B cell (primary cell): ENCODE measurements at regions of chr5 and their contacts with region 1.

Region 1: GRCh38 chr5:137778772-137779564 is 24.8 kb upstream of the HNRNPA0 start:
- DNase-seq: peak; percentile 57
- ATAC-seq: no peak
- H3K4me3 ChIP-seq: no peak overlapping the region
- H3K4me3 Mint-ChIP-seq: no peak overlapping the region
- H3K27ac ChIP-seq: no peak overlapping the region
- H3K27ac Mint-ChIP-seq: no peak overlapping the region
- H3K4me1 ChIP-seq: no peaks in the 10 kb centered on the region
- H3K4me1 Mint-ChIP-seq: peaks cover 1% of the 10 kb centered on the region
- H3K27me3 ChIP-seq: no peaks in the 10 kb centered on the region
- H3K27me3 Mint-ChIP-seq: no peaks in the 10 kb centered on the region
- CTCF ChIP-seq: peak; percentile 91

Region 2: GRCh38 chr5:137629646-137630045 is 149.3 kb before region 1 on chr5:
- CTCF ChIA-PET with region 1: interaction called, 13 read pairs
- POLR2A ChIA-PET with region 1: no interaction called
- intact Hi-C with region 1: no loop called
- DNase-seq: peak; percentile 58
- ATAC-seq: peak; percentile 51
- H3K4me3 ChIP-seq: no peak overlapping the region
- H3K4me3 Mint-ChIP-seq: no peak overlapping the region
- H3K27ac ChIP-seq: no peak overlapping the region
- H3K27ac Mint-ChIP-seq: no peak overlapping the region
- H3K4me1 ChIP-seq: no peaks in the 10 kb centered on the region
- H3K4me1 Mint-ChIP-seq: no peaks in the 10 kb centered on the region
- H3K27me3 ChIP-seq: no peaks in the 10 kb centered on the region
- H3K27me3 Mint-ChIP-seq: no peaks in the 10 kb centered on the region
- CTCF ChIP-seq: peak; percentile 95

Region 3: DNA sequence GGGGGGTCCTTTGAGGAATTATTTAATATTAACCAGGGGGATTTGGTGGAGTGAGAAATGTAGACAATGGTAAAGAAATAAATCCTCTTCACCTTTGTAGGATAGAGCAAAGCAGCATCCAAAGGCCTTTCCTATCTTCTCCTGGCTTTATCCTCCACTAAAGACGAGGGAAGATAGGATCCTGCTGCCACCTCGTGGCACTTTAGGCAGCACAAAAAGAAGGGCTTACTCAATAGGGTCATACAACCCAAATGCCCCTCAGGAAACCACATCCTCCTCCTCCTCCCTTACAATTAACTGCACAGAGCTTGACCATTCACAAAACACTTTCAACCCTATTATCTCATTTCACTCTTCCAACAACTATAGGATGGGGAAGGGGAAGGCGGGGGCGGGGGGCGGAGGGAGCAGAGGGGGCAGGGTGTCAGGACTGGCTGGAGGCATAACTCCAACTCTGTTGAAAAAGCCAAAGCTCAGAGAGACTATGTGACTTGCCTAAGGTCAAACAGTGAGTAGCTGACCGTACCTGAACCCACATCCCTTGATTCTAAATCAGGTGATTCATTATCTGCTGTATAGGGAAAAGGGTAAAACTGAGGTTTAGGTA is 43.3 kb after region 1 on chr5:
- CTCF ChIA-PET with region 1: interaction called, 13 read pairs
- POLR2A ChIA-PET with region 1: no interaction called
- intact Hi-C with region 1: loop called (anchors 1 kb)
- DNase-seq: peak; percentile 22
- ATAC-seq: no peak
- H3K4me3 ChIP-seq: no peak overlapping the region
- H3K4me3 Mint-ChIP-seq: no peak overlapping the region
- H3K27ac ChIP-seq: no peak overlapping the region
- H3K27ac Mint-ChIP-seq: no peak overlapping the region
- H3K4me1 ChIP-seq: no peaks in the 10 kb centered on the region
- H3K4me1 Mint-ChIP-seq: no peaks in the 10 kb centered on the region
- H3K27me3 ChIP-seq: no peaks in the 10 kb centered on the region
- H3K27me3 Mint-ChIP-seq: no peaks in the 10 kb centered on the region
- CTCF ChIP-seq: peak; percentile 13

Region 4: DNA sequence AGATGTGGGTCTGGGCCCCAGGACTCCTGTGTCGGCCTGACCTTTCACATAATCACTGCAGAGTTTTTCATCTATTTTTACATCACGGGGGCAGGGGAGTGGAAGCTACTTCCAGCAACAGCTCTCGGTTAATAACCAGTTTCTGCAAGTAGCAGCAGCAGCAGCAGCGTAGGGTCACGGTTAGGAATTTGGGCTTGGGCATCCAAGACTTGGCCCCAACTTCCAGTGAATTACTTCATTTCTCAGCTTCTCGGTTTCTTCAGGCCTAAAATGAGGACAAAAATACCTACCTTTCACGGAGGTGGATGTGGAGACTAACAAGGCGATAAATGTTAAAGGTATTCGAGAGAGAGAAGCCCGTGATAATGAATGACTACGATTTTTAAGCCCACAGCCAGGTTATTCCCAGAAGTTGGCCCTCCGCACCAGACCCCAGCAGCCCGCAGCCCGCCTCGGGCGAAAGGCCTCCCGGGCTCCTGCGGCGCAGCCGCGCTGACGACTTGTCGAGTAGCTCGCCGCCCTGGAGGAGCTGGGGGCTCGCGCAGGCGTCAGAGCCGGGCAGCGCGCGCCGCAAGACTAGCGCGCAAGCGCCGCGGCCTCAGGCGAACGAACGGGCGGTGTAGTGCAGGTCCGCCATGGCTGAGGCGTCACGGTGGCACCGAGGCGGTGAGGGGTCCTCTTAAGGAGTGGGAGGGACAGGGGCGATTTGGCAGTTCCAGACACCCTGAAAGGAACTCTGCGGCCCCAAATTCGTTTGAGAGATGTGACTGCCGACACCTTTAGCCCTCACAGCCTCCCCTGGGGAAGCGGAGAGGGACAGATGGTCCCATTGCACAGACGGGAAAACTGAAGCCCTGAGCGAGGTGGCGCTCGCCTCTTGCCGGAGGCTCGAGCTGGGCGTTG is 110.1 kb after region 1 on chr5 and contains the start of gene PKD2L2:
- CTCF ChIA-PET with region 1: interaction called, 11 read pairs
- POLR2A ChIA-PET with region 1: no interaction called
- intact Hi-C with region 1: no loop called
- DNase-seq: peak; percentile 92
- ATAC-seq: peak; percentile 99
- H3K4me3 ChIP-seq: peak within 1 kb of the TSS; percentile 39 to 81 (median 77)
- H3K4me3 Mint-ChIP-seq: peak within 1 kb of the TSS; percentile 90
- H3K27ac ChIP-seq: peak within 1 kb of the TSS; percentile 93 to 95
- H3K27ac Mint-ChIP-seq: peak within 1 kb of the TSS; percentile 97
- H3K4me1 ChIP-seq: peaks cover 20 to 22% of the 10 kb centered on the region in 2 donors
- H3K4me1 Mint-ChIP-seq: peaks cover 36% of the 10 kb centered on the region
- H3K27me3 ChIP-seq: no peaks in the 10 kb centered on the region
- H3K27me3 Mint-ChIP-seq: no peaks in the 10 kb centered on the region
- CTCF ChIP-seq: no peak
- total RNA-seq, gene PKD2L2: 0.37 and 0.63 TPM in 2 replicates

Region 5: GRCh38 chr5:137954131-137954879 is 175.3 kb after region 1 on chr5:
- CTCF ChIA-PET with region 1: interaction called, 11 read pairs
- POLR2A ChIA-PET with region 1: no interaction called
- intact Hi-C with region 1: no loop called
- DNase-seq: no peak
- ATAC-seq: no peak
- H3K4me3 ChIP-seq: no peak overlapping the region
- H3K4me3 Mint-ChIP-seq: no peak overlapping the region
- H3K27ac ChIP-seq: no peak overlapping the region
- H3K27ac Mint-ChIP-seq: peak overlapping the region; percentile 20
- H3K4me1 ChIP-seq: no peaks in the 10 kb centered on the region
- H3K4me1 Mint-ChIP-seq: no peaks in the 10 kb centered on the region
- H3K27me3 ChIP-seq: no peaks in the 10 kb centered on the region
- H3K27me3 Mint-ChIP-seq: no peaks in the 10 kb centered on the region
- CTCF ChIP-seq: no peak

Region 6: DNA sequence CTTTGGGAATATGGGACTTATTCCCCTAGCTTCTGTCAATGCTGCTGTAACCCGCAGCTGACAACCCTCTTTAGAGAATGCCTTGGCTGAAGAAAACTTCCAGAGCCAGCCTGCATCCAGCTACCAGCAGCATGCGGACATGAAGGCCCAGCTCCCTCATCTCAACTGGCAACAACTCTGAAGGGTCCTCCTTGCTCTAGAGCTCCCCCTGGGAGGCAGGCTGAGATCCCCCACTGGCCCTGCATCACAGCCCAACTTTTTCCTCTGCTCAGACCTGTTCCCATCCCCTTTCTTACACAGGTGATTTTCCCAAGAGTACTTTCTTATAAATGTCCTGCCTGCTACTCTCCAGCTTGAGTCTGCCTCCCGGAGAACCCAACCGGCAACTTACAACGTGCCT is 286.1 kb after region 1 on chr5:
- CTCF ChIA-PET with region 1: interaction called, 133 read pairs
- POLR2A ChIA-PET with region 1: no interaction called
- intact Hi-C with region 1: no loop called
- DNase-seq: no peak
- ATAC-seq: no peak
- H3K4me3 ChIP-seq: no peak overlapping the region
- H3K4me3 Mint-ChIP-seq: no peak overlapping the region
- H3K27ac ChIP-seq: no peak overlapping the region
- H3K27ac Mint-ChIP-seq: no peak overlapping the region
- H3K4me1 ChIP-seq: no peaks in the 10 kb centered on the region
- H3K4me1 Mint-ChIP-seq: peaks cover 4% of the 10 kb centered on the region
- H3K27me3 ChIP-seq: no peaks in the 10 kb centered on the region
- H3K27me3 Mint-ChIP-seq: no peaks in the 10 kb centered on the region
- CTCF ChIP-seq: no peak